Ovary (tissue), 10 donors: ENCODE measurements at regions of chr1 and their contacts with region 1.

Region 1: GRCh38 chr1:96253246-96254035 is 468.1 kb upstream of the PTBP2 start:
- DNase-seq: no peak
- H3K4me3 ChIP-seq: no peak overlapping the region
- H3K27ac ChIP-seq: no peak overlapping the region
- H3K4me1 ChIP-seq: no peaks in the 10 kb centered on the region
- H3K27me3 ChIP-seq: no peaks in the 10 kb centered on the region
- CTCF ChIP-seq: no peak
- EP300 ChIP-seq: no peak
- POLR2A ChIP-seq: no peak

Region 2: DNA sequence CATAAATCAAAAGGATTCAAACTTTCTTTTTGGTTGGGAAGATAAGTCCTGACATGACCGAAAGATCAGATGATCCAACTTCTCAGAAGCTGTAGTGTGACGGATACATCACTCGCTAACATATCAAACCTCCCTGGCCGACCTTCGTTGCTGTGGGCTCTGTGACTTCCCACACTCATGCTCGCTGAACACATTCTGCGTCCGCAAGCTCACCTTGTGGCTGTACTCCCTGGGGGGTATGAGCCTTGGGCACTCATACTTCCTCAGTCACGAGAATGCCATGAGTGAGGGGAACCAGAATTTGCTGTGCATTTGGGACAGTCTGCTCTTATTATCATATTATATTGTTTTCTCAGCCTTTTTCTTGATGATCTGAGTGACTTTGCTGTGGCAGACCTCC is 914.1 kb before region 1 on chr1:
- intact Hi-C with region 1: loop called in 1 of 4 experiments (anchors 10 kb)
- DNase-seq: no peak
- H3K4me3 ChIP-seq: no peak overlapping the region
- H3K27ac ChIP-seq: no peak overlapping the region
- H3K4me1 ChIP-seq: no peaks in the 10 kb centered on the region
- H3K27me3 ChIP-seq: no peaks in the 10 kb centered on the region
- CTCF ChIP-seq: no peak
- EP300 ChIP-seq: no peak
- POLR2A ChIP-seq: no peak

Region 3: GRCh38 chr1:96049759-96050409 is 203.6 kb before region 1 on chr1:
- intact Hi-C with region 1: no loop called
- DNase-seq: no peak
- H3K4me3 ChIP-seq: no peak overlapping the region
- H3K27ac ChIP-seq: no peak overlapping the region
- H3K4me1 ChIP-seq: no peaks in the 10 kb centered on the region
- H3K27me3 ChIP-seq: no peaks in the 10 kb centered on the region
- CTCF ChIP-seq: no peak
- EP300 ChIP-seq: no peak
- POLR2A ChIP-seq: no peak

Region 4: GRCh38 chr1:96206451-96206850 is 47.0 kb before region 1 on chr1:
- intact Hi-C with region 1: no loop called
- DNase-seq: no peak
- H3K4me3 ChIP-seq: no peak overlapping the region
- H3K27ac ChIP-seq: no peak overlapping the region
- H3K4me1 ChIP-seq: no peaks in the 10 kb centered on the region
- H3K27me3 ChIP-seq: no peaks in the 10 kb centered on the region
- CTCF ChIP-seq: no peak
- EP300 ChIP-seq: no peak
- POLR2A ChIP-seq: no peak

Region 5: GRCh38 chr1:96544831-96545221 is 291.4 kb after region 1 on chr1:
- intact Hi-C with region 1: no loop called
- DNase-seq: no peak
- H3K4me3 ChIP-seq: no peak overlapping the region
- H3K27ac ChIP-seq: no peak overlapping the region
- H3K4me1 ChIP-seq: no peaks in the 10 kb centered on the region
- H3K27me3 ChIP-seq: no peaks in the 10 kb centered on the region
- CTCF ChIP-seq: no peak
- EP300 ChIP-seq: no peak
- POLR2A ChIP-seq: no peak